Activated naive CD4-positive, alpha-beta T cell treated with anti-CD3 and anti-CD28 coated beads for 36 hours (primary cell): ENCODE measurements at regions of chr4 and their contacts with region 1.

Region 1: DNA sequence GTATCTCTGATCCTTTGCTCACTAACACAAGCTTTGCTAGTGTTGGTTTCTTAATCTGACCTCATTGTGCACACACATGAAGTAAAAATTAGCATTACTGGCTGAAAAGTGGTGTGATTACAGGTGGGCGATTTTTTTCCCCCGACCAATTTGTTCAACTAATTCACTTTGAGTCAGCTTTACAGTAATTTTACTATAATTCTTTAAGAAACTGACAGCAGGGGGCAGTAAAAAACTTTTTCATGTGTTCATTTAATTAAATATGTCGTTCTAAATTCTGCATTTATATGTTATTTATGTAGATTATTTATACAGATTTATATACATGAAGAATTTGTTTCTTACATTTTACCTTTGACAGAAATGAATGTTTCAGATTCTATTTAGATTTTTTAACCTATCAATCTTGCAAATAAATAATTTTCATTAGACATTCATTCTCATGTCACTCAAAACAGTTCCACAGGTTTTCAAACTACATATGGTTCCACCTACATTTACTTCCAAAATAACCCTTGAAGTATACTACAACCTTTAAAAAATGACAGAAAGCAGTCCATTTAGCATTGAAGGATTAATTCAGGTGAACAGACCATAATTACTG is 17.5 kb downstream of the PALLD start:
- DNase-seq: no peak
- H3K4me3 Mint-ChIP-seq: no peak overlapping the region
- H3K27ac Mint-ChIP-seq: no peak overlapping the region
- H3K4me1 Mint-ChIP-seq: peaks cover 32% of the 10 kb centered on the region
- H3K27me3 Mint-ChIP-seq: no peaks in the 10 kb centered on the region

Region 2: GRCh38 chr4:166816890-166817289 is 1697.5 kb before region 1 on chr4:
- CTCF ChIA-PET with region 1: no interaction called
- intact Hi-C with region 1: no loop called
- DNase-seq: no peak
- H3K4me3 Mint-ChIP-seq: no peak overlapping the region
- H3K27ac Mint-ChIP-seq: no peak overlapping the region
- H3K4me1 Mint-ChIP-seq: no peaks in the 10 kb centered on the region
- H3K27me3 Mint-ChIP-seq: no peaks in the 10 kb centered on the region

Region 3: DNA sequence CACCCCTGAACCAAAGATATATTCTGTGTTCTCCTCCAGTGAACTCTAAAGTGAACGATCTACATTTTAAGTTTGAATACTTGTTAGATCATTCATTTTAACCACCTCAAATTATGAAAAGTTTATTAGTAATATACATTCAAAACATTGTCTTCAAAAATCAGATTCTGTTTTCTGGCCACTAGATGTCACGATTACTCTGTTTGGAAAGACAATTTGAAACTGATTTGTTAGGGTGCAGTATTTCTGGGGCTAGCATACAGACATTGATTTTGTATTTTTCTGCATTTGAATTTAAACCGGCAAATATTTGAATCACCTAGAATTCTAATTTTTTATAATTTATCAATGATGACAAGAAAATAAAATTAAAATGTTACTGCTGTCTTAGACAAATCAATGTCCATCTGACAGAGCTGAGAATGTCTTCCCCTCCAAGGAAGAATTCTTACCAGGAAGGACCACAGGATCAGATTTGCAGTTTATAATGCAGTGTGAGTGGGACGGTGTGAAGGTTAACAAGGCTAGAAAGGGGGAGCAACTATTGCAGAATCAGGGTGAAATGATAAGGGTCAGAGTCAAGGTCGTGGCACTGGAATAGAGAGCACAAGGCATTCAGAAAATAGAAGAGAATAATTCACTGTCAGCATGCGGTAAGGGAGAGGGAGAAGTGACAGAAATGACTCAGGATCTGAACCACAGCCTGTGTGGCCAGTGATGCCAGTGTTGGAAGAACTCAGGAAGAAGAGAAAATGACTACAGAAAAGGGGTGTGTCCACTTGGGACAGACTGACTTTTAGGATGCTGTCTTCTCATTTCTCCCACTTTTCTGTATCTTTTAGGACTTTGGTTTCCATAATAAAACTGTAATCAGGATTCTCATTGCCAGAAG is 330.4 kb before region 1 on chr4:
- CTCF ChIA-PET with region 1: no interaction called
- intact Hi-C with region 1: loop called (anchors 1 kb)
- DNase-seq: no peak
- H3K4me3 Mint-ChIP-seq: no peak overlapping the region
- H3K27ac Mint-ChIP-seq: no peak overlapping the region
- H3K4me1 Mint-ChIP-seq: no peaks in the 10 kb centered on the region
- H3K27me3 Mint-ChIP-seq: no peaks in the 10 kb centered on the region

Region 4: DNA sequence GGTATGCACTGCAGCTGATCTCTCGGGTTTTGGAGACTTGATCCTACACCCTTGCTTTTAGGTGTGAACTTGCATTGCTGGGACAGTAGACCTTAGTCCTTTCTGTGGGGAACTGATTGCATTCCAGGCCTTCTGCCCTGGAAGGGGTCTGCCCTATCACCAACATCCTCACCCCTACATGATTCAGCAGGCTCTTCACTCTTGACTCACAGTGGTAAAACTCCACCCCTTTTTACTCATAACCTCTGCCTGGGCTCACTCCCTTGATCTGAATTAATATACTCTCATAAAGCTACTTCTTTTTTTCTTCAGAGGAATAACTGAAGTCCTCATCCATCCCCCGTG is 27.4 kb before region 1 on chr4:
- CTCF ChIA-PET with region 1: no interaction called
- intact Hi-C with region 1: loop called (anchors 1 kb)
- DNase-seq: peak; percentile 37
- H3K4me3 Mint-ChIP-seq: no peak overlapping the region
- H3K27ac Mint-ChIP-seq: no peak overlapping the region
- H3K4me1 Mint-ChIP-seq: peaks cover 39% of the 10 kb centered on the region
- H3K27me3 Mint-ChIP-seq: no peaks in the 10 kb centered on the region

Region 5: DNA sequence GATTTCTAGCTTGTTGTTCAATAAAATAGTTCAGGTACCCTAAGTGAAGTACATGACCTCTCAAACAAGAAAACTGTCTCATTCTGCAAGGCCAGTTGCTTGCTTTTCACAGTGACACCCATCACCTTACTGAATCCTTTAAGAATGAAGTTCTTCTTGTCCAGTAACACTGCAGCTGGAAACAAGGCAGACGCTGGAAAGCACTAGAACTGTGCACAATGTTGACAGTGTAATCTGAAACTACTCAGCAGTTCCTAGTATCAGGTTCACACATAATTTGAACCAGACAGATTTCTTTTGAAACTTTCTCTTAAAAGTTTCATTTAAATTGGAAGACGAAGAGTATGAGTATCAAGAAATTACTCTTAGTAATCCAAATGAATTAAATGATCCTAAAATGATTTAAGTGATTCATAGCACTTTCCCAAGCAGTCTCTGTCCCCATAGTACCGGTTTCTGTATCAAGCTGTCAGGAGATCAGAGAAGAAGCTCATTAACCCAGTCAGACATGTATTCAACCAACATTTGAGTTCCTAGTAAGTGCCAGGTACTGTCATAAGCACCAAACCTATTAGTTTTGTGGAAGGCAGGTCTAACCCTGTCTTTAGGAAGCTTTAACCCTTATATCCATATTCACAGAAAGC is 46.0 kb after region 1 on chr4:
- CTCF ChIA-PET with region 1: no interaction called
- intact Hi-C with region 1: no loop called
- DNase-seq: no peak
- H3K4me3 Mint-ChIP-seq: no peak overlapping the region
- H3K27ac Mint-ChIP-seq: no peak overlapping the region
- H3K4me1 Mint-ChIP-seq: peaks cover 3% of the 10 kb centered on the region
- H3K27me3 Mint-ChIP-seq: peaks cover 13% of the 10 kb centered on the region

Region 6: DNA sequence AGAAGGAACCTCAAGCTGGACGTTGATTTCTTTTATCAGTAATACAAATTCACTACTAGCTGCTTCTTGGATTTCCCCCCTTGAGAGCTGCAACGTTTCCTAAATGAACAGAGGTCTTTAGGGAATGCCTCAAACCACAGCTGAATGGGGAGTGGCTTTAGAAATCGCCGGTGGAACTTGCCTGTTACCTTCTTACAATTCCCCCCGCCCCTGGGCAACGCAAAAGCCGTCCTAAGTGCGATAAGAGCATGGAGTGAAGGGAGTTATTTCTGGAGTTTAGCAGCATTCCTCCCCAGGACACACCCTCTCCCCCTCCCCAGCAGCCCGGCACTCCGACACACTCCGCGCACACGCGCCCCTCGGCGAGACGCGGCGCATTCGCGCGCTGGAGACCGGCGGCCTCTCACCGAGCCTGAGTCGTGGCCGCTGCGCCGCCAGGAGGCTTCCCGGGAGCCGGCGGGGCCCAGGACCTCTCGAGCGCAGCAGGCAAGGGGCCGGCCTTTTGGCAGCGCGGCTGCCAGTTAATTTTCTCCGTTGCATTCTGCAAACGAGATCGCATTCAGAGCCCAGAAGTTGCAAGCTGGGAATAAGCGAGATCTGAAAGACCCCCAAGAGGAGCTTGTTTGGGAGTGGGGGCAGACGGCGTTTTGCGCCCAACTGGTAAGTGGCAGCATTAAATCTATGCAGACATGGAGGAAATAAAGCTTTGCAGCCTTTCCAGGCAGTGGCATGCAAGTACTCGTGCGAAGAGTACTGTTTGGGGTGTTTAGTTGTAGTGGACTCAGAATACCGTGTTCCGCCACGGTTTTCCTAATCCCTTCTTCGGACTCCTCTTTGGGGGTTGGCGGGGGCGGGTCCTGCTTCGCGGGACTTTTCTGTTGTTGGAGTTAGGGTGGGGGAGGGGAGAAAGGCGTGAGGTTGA is 117.2 kb after region 1 on chr4:
- CTCF ChIA-PET with region 1: interaction called, 3 read pairs
- intact Hi-C with region 1: loop called (anchors 5 kb)
- DNase-seq: peak; percentile 14
- H3K4me3 Mint-ChIP-seq: peak overlapping the region; percentile 38
- H3K27ac Mint-ChIP-seq: no peak overlapping the region
- H3K4me1 Mint-ChIP-seq: peaks cover 9% of the 10 kb centered on the region
- H3K27me3 Mint-ChIP-seq: peaks cover 59% of the 10 kb centered on the region

Region 7: DNA sequence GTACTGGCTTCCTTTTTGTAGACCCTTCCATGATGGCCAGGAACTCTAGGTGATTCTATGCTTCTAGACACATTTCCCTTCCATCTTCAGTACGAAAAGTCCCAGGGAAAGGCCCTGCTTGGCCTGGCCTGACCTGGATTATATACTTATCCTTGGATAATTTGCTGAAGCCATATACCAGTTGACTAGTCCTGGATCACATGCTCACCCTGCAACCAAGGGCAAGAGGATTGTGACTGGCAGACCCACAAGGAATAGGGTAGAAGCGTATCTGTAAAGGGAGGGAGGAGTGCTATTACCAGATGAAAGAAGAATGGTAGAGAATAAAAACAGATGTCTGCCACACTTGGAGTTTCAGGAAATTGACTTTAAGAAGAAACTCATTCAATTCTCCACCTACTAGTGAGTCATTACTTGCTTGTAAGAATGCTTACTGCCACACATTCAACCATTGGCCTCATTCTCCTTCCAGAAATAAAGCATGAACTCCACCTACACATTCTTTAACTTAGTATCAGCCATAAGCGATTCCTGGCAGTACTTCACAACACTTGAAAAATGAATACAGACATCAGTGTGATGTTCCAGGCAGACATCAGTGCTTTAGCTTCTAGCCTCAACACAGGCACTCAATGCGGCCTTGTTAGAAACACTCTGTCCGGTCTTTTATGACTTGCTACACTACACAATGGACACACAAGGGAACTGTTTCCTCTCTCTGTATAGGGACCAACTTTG is 353.9 kb after region 1 on chr4:
- CTCF ChIA-PET with region 1: no interaction called
- intact Hi-C with region 1: loop called (anchors 2 kb)
- DNase-seq: no peak
- H3K4me3 Mint-ChIP-seq: no peak overlapping the region
- H3K27ac Mint-ChIP-seq: peak overlapping the region; percentile 77
- H3K4me1 Mint-ChIP-seq: peaks cover 6% of the 10 kb centered on the region
- H3K27me3 Mint-ChIP-seq: peaks cover 17% of the 10 kb centered on the region

Region 8: GRCh38 chr4:169485791-169486742 is 971.7 kb after region 1 on chr4:
- CTCF ChIA-PET with region 1: no interaction called
- intact Hi-C with region 1: loop called (anchors 2 kb)
- DNase-seq: peak; percentile 66
- H3K4me3 Mint-ChIP-seq: no peak overlapping the region
- H3K27ac Mint-ChIP-seq: no peak overlapping the region
- H3K4me1 Mint-ChIP-seq: no peaks in the 10 kb centered on the region
- H3K27me3 Mint-ChIP-seq: no peaks in the 10 kb centered on the region